Cardiac septum (tissue), 1 donor: ENCODE measurements at regions of chr10 and their contacts with region 1.

Region 1: DNA sequence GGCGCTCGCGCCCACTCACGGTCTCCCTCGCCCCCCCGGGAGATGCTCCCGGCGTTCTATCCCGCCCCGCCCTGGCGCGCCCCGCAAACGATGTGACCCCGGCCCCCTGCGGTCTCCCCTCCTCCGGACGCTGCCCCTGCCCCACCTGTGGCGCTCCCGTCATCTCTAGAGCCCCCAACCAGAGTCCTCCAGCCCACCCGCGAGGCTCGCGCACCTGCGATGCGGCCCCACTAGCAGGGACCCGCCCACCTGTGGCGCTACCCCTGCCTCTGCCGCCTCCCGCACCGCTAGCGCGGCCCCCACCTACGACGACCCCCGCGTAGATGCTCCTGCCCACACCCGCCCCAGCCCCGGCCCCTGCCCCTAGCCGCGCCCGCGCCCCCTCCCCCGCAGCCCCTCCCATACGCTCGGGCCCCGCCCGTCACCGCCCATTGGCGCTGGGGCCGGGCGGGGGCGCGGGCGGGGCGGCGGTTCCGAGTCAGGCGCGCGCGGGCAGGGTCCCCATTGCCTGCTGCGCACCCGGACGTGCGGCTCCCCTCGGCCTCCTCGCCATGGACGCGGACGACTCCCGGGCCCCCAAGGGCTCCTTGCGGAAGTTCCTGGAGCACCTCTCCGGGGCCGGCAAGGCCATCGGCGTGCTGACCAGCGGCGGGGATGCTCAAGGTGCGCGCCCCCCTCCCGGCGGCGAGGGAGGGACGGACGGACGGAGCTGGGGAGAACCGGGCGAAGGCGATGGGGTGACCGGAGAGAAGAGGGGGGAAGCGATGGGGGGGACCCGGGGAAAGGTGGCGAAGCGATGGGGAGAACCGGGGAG is at the start of gene PFKP:
- DNase-seq: no peak
- total RNA-seq, gene PFKP: 215 TPM

Region 2: GRCh38 chr10:3107426-3107961 is 40.2 kb after region 1 on chr10:
- intact Hi-C with region 1: loop called (anchors 1 kb)
- DNase-seq: peak; percentile 86

Region 3: DNA sequence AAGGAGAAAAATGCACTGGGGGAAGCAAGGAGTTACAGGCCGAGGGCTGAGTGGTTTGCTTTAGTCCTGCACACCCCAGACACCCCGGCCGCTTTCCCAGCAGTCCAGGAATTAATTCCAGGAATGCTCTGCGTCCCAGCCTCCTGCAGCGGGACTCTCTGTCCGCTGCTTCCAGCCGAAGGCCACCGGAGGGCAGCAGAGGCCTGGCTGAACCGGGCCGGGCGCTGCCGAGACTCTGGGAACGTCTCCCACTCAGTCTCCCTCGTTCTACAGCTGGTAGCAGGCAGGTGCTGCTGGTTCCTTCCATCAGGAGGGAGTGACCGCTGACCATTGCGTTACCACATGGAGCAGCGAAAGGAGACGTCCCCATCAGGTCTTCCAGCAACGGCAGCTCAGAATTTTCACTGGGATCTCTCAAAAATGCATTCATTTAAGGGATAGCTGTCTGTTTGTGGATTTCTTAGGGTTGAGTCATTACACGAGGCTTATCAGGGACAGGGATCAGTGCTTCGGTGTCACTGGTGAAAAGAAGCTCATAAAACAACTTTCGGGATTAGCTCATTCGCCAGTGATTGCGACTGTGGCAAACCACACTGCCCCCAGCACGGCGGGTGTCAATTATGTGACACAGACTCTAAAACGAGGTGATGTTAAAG is 130.2 kb after region 1 on chr10:
- intact Hi-C with region 1: no loop called
- DNase-seq: peak; percentile 88